Activated CD4-positive, alpha-beta T cell treated with anti-CD3 and anti-CD28 coated beads, Interleukin-2, amount 10 ng/mL, durations not matched to agents 24 days and 14 days (primary cell): ENCODE measurements at regions of chr10 and their contacts with region 1.

Region 1: DNA sequence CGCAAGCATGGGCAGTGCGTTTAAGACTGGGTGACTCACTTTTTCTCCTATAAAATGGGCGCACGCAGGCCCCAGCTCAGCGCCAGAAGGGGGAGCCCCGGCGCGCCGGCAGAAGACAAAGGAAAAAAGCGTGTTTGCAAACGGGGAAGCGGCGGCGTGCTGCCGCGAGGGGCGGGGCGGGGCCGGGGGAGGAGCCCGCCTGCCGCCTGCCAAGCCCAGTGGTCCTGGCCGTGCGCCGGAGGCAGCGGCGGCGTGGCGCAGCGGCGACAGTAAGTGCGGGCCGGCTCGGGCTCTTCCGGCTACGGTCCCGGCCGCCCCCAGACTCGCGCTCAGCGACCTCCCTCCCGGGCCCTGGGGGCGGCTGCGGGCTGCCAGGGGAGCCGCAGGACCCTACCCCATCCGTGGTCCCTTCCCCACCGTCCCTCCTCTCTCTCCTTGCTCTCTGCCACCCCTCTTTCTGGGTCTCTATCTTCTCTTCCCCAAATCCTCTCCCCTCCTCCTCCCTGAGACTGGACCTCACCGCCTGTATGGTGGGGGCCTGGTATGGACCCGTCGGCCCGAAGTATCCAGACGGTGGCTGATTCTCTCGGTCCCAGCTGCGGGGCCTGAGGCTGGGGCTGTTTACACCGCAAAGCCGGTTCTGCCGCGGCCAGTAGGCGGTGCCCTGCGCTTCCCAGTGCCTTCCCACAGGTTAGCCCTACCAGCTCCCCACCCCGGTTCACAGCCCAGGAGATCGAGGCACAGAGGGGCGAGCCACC is at the start of gene SLC29A3:
- DNase-seq: peak; percentile 95
- H3K4me3 Mint-ChIP-seq: peak within 1 kb of the TSS; percentile 98
- H3K27ac Mint-ChIP-seq: peak within 1 kb of the TSS; percentile 94
- H3K4me1 Mint-ChIP-seq: peaks cover 34% of the 10 kb centered on the region
- H3K27me3 Mint-ChIP-seq: no peaks in the 10 kb centered on the region
- total RNA-seq, gene SLC29A3: 5.6 and 6.0 TPM in 2 replicates

Region 2: DNA sequence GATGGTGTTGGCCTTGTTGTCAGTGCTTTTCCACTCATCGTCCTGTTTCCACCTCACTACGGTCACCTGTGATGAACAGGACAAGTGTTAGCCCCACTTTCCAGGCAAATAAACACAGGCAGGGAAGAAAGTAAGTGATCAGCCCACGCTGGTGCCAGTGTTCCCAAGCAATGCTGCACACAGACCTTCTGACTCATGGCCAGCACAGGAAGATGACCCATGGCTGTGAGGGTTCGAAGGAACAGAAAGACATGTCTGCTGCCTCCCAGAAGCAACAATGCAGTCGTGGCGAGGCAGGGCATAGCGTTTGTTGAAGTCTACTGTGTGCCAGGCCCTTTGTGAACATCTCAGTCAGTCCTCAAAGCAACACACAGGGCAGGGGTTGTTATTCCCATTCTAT is 35.6 kb after region 1 on chr10:
- intact Hi-C with region 1: loop called (anchors 1 kb)
- DNase-seq: no peak
- H3K4me3 Mint-ChIP-seq: no peak overlapping the region
- H3K27ac Mint-ChIP-seq: no peak overlapping the region
- H3K4me1 Mint-ChIP-seq: no peaks in the 10 kb centered on the region
- H3K27me3 Mint-ChIP-seq: no peaks in the 10 kb centered on the region

Region 3: DNA sequence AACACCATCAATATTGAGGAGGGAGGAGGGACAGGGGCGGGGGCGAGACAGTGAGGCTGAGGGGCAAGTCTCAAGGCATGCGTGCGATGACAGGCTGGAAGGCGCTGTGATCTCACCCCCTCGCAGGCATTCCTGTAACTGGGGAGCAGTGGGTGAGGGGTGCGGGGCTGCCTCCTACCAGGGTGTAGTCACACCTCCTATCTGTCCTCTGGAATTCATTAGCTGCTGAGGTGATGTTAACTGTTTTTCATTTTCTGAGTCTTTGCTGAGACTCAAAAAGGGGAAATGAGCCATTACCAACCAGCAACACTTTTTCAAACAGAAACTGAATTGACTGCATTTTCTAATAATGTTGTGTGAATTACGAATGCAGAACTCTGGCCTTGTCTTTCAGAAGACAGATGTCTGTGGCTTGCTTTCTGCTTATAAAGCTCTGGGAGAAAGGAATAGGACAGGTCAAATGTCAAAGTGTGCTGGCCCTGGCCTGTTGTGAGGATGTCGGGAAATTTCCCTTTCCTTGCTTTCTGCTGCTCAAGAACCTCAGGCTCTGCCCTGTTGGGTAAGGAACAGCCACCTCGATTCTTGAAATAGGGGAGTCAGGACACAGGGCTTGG is 53.8 kb after region 1 on chr10:
- intact Hi-C with region 1: loop called (anchors 1 kb)
- DNase-seq: no peak
- H3K4me3 Mint-ChIP-seq: no peak overlapping the region
- H3K27ac Mint-ChIP-seq: no peak overlapping the region
- H3K4me1 Mint-ChIP-seq: peaks cover 4% of the 10 kb centered on the region
- H3K27me3 Mint-ChIP-seq: peaks cover 8% of the 10 kb centered on the region

Region 4: GRCh38 chr10:71404503-71405295 is 85.5 kb after region 1 on chr10:
- intact Hi-C with region 1: no loop called
- DNase-seq: no peak
- H3K4me3 Mint-ChIP-seq: no peak overlapping the region
- H3K27ac Mint-ChIP-seq: no peak overlapping the region
- H3K4me1 Mint-ChIP-seq: no peaks in the 10 kb centered on the region
- H3K27me3 Mint-ChIP-seq: peaks cover 16% of the 10 kb centered on the region